Heart right ventricle (tissue), 16 donors: ENCODE measurements at regions of chr11 and their contacts with region 1.

Region 1: GRCh38 chr11:2151500-2152257 is 9.3 kb downstream of the INS start:
- DNase-seq: peak; percentile 71 to 72
- ATAC-seq: peak; percentile 29 to 71 (median 52)
- H3K4me3 ChIP-seq: peak overlapping the region in 1 of 10 donors; percentile 5
- H3K27ac ChIP-seq: no peak overlapping the region
- H3K4me1 ChIP-seq: peaks cover 3 to 18% (median 7%) of the 10 kb centered on the region in 9 donors
- H3K27me3 ChIP-seq: peaks cover 5 to 53% (median 46%) of the 10 kb centered on the region in 7 donors
- CTCF ChIP-seq: peak; percentile 69 to 88 (median 77)

Region 2: DNA sequence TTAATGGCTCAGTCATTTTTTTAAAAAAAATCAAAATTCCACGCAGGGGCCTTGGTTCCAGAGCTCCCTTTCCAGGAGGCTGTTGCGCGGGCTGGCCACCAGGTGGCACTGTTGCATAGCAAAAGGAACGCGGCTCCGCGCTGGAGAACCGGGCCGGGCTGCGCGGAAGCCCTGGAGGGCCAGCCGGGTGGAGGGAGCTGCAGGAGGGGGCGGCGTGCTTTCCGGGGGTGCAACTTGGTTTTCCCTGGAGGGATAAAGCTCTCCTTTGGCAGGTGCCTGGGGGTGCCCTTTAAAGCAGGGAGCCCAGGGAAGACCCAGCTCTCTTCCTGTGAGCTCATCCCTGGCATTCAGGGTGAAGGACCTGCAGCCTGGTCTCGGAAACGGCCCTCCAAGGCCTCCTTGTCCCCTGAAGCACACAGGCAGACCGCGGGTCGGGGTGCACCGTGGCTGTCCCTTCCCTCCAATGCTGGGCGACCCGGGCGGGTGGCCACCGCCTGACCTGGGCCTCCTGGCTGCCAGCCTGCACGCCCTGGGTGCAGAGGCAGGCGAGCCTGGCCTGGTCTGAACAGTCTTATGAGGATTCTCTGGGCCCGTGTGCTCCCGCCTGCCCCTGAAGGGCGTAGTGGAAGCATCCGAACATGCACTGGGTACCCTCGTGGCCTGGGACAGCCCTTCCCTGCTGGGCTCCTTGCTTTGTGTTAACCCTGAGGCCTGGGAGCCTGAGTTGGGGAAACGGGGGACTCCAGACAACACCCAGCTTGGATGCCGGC is 498.7 kb before region 1 on chr11:
- intact Hi-C with region 1: loop called in 9 of 10 experiments (anchors 2 to 10 kb)
- DNase-seq: peak; percentile 66 to 79
- ATAC-seq: peak; percentile 80 to 92 (median 85)
- H3K4me3 ChIP-seq: no peak overlapping the region
- H3K27ac ChIP-seq: no peak overlapping the region
- H3K4me1 ChIP-seq: peaks cover 0 to 6% (median 4%) of the 10 kb centered on the region in 9 donors
- H3K27me3 ChIP-seq: peaks cover 0 to 31% (median 11%) of the 10 kb centered on the region in 7 donors
- CTCF ChIP-seq: peak; percentile 94 to 99 (median 98)

Region 3: DNA sequence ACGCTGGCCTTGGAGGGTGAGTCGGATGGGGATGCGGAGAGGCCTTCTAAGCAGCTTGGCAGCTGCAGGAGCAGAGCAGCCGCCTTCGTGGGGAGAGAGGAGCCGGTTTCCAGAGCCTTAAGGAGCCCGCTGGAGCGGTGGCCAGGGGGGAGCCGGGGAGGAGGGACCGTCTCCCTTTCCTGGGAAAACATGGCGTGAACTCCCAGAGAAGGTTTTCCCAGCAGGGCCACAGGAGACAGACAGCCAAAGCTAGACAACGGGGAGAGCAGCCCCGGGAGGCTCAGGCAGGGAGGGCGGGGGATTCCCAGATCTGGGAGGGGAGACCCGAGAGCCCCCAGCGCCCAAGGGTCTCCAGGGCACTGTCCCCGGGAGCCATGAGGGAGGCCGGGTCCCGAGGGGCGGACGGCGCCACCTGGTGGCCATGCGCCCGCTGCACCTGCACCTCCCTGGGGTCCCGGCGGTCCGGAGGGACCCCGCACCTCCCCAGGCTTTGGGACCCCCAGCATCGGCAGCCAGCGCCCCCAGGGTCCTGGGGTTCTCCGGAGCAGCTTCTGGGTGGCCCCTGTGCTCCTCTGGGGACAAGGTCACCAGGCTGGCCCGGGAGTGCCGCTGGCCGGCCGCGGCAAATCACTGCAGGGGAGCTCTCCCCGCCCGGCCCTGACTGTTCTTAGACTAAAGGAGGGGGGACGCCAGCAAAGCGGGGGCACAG is 319.3 kb before region 1 on chr11:
- intact Hi-C with region 1: loop called in 9 of 10 experiments (anchors 1 to 5 kb)
- DNase-seq: peak in 1 of 2 donors; percentile 73
- ATAC-seq: peak; percentile 74 to 85 (median 80)
- H3K4me3 ChIP-seq: peak overlapping the region in 8 of 10 donors; percentile 8 to 35 (median 28)
- H3K27ac ChIP-seq: peak overlapping the region in 3 of 10 donors; percentile 21 to 37 (median 26)
- H3K4me1 ChIP-seq: peaks cover 1 to 20% (median 11%) of the 10 kb centered on the region in 9 donors
- H3K27me3 ChIP-seq: peaks cover 0 to 40% (median 12%) of the 10 kb centered on the region in 7 donors
- CTCF ChIP-seq: peak; percentile 94 to 100 (median 98)

Region 4: DNA sequence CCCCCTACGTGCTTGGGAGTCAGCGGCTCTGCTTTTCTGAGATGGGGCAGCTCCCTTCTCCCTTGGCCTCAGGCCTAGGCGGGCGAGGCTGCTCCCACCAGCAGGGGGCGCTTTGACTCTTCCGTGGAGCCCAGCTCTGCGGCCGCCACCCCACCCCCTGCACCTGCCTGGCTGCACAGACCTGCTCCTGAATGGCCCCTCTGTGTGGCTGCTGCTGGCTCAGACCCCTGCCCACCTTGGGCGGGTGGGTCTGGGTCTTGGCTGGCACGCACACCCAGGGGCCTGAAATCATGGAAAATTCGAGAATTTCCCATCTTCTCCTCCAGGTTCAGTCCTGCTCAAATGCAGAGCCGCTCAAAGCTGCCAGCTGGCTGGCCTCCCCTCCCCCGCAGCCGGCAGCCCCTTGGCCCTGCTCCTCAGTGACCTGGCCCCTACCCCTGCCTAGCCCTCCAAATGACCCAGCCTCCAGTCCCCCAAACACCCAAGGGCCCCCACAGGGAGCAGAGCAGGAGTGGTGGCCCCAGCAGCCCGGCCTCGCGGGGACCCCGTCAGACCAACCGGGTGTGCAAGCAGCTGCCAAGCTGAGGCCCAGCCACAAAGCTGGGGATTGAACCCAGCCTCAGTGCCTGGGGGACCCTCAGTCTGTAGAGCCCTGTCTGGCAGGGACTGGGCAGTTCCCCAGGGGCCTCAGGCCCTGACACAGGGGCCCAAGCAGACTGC is 269.0 kb before region 1 on chr11:
- intact Hi-C with region 1: loop called in 3 of 10 experiments (anchors 2 to 10 kb)
- DNase-seq: peak; percentile 86 to 91
- ATAC-seq: peak; percentile 72 to 88 (median 84)
- H3K4me3 ChIP-seq: no peak overlapping the region
- H3K27ac ChIP-seq: peak overlapping the region; percentile 88 to 100 (median 96)
- H3K4me1 ChIP-seq: peaks cover 32 to 57% (median 46%) of the 10 kb centered on the region in 9 donors
- H3K27me3 ChIP-seq: no peaks in the 10 kb centered on the region
- CTCF ChIP-seq: peak; percentile 87 to 96 (median 94)

Region 5: GRCh38 chr11:2120359-2121100 is 31.1 kb before region 1 on chr11:
- intact Hi-C with region 1: no loop called
- DNase-seq: no peak
- ATAC-seq: no peak
- H3K4me3 ChIP-seq: no peak overlapping the region
- H3K27ac ChIP-seq: no peak overlapping the region
- H3K4me1 ChIP-seq: no peaks in the 10 kb centered on the region
- H3K27me3 ChIP-seq: peaks cover 0 to 31% (median 26%) of the 10 kb centered on the region in 7 donors
- CTCF ChIP-seq: no peak